AG04450 (cell line): ENCODE measurements at regions of chr2 and their contacts with region 1.

Region 1: DNA sequence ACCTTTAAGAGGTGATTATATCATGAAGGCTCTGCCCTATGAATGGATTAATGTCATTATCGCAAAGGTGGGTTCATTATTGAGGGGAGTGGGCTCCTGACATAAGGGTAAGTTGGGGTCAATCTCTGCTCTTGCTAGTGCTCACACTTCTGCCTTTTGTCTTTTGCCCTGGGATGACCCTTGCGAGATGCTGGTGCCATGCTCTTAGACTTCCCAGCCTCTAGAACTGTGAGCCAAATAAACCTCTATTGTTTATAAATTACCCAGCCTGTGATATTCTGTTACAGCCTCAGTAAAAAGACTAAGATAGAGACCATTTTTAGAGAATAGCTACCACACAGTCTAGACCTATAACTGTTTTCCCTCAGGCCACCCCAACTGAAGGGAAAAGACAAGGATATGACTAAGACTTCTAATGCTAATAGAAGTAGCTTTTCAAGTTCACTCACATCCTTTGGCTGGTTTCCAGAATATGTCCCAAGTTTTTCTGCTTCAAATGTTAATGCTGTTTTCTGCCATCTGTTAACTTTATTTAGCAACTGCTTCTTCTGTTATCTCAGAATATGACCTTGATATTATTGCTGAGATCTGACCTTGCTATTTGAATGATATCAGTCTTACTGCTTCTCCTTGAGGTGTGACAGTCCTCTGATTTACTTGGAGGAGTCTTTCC is 65.1 kb upstream of the STAM2 start:
- DNase-seq: no peak
- H3K4me3 ChIP-seq: no peak overlapping the region
- H3K27ac ChIP-seq: no peak overlapping the region
- H3K27me3 ChIP-seq: no peaks in the 10 kb centered on the region
- CTCF ChIP-seq: no peak

Region 2: GRCh38 chr2:151945191-151945590 is 295.5 kb before region 1 on chr2:
- CTCF ChIA-PET with region 1: no interaction called
- POLR2A ChIA-PET with region 1: interaction called, 11 read pairs
- DNase-seq: no peak
- H3K4me3 ChIP-seq: no peak overlapping the region
- H3K27ac ChIP-seq: no peak overlapping the region
- H3K27me3 ChIP-seq: no peaks in the 10 kb centered on the region
- CTCF ChIP-seq: no peak